Ovary (tissue), 10 donors: ENCODE measurements at regions of chr10 and their contacts with region 1.

Region 1: GRCh38 chr10:72340510-72341261 is 14.0 kb downstream of the DNAJB12 start:
- DNase-seq: peak; percentile 64 to 84 (median 75)
- H3K4me3 ChIP-seq: no peak overlapping the region
- H3K27ac ChIP-seq: peak overlapping the region in 1 of 2 donors; percentile 1
- H3K4me1 ChIP-seq: peaks cover 11% of the 10 kb centered on the region
- H3K27me3 ChIP-seq: no peaks in the 10 kb centered on the region
- CTCF ChIP-seq: peak; percentile 65 to 87 (median 80)
- EP300 ChIP-seq: no peak
- POLR2A ChIP-seq: no peak

Region 2: GRCh38 chr10:71957546-71958275 is 383.0 kb before region 1 on chr10:
- intact Hi-C with region 1: loop called in 3 of 4 experiments (anchors 5 to 10 kb)
- DNase-seq: no peak
- H3K4me3 ChIP-seq: no peak overlapping the region
- H3K27ac ChIP-seq: no peak overlapping the region
- H3K4me1 ChIP-seq: no peaks in the 10 kb centered on the region
- H3K27me3 ChIP-seq: no peaks in the 10 kb centered on the region
- CTCF ChIP-seq: no peak
- EP300 ChIP-seq: no peak
- POLR2A ChIP-seq: no peak

Region 3: GRCh38 chr10:72126184-72126871 is 214.4 kb before region 1 on chr10:
- intact Hi-C with region 1: loop called in 2 of 4 experiments (anchors 10 kb)
- DNase-seq: no peak
- H3K4me3 ChIP-seq: no peak overlapping the region
- H3K27ac ChIP-seq: peak overlapping the region in 1 of 2 donors; percentile 0
- H3K4me1 ChIP-seq: peaks cover 1% of the 10 kb centered on the region
- H3K27me3 ChIP-seq: no peaks in the 10 kb centered on the region
- CTCF ChIP-seq: peak in 1 of 3 donors; percentile 37
- EP300 ChIP-seq: no peak
- POLR2A ChIP-seq: no peak

Region 4: DNA sequence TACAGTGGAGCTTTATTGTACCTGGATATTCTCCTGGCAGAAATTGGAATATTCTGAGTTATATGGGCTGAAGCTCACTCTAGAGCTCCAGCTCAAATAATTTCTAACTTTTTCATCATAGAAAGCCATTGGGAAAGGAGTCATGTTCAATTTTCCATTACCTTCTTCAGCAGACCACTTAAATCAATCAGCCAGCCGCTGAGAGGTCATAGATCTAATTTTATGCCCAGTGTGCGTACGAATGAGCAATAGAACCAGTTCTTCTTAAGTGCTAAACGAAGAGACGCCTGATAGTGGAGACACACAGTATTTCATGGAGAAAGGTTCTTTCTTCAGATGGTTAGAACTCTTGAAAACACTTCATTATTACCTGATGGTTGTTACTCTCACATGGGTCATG is 49.0 kb after region 1 on chr10:
- intact Hi-C with region 1: no loop called
- DNase-seq: no peak
- H3K4me3 ChIP-seq: no peak overlapping the region
- H3K27ac ChIP-seq: no peak overlapping the region
- H3K4me1 ChIP-seq: no peaks in the 10 kb centered on the region
- H3K27me3 ChIP-seq: no peaks in the 10 kb centered on the region
- CTCF ChIP-seq: no peak
- EP300 ChIP-seq: no peak
- POLR2A ChIP-seq: no peak